ENCODE measurements at regions of chr10 and their contacts with region 1.

Region 1: DNA sequence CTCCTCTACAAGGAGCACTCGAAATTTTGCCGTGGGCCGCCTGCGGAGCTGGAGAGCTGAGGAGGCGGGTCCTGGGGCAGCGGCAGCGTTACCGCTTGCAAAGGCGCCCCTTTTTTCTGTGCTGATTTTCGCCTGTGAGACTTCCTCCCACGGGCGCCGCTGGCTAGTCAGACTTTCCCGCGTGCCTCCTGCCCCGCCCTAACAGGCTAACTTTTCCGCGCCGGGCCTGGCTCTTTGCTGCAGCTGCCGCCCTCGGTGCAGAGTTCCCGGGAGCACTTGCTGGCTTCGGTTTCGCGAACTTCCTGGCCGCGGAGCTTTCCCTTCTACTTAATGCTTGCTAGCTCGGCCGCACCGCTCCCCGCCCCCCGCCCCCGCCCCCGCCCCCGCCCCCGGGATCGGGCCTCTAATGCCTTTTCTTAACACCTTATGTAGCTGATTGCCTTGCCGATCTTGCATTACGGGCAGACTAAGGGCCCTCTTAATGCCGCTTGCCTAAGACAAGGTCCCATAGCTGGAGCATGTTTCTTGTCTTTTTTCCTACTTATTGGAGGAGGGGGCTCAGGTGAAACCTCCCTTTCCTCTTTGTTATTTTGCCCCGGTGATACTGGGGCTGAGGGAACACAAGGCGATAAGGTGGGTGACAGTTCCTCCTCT is 37.9 kb upstream of the RASGEF1A start:
- DNase-seq: peak in 7 of 9 donors; percentile 23 to 60 (median 32)
- ATAC-seq: peak; percentile 71
- H3K4me3 ChIP-seq: peak overlapping the region; percentile 30
- H3K4me3 Mint-ChIP-seq: peak overlapping the region; percentile 76 to 87 (median 82)
- H3K27ac ChIP-seq: no peak overlapping the region
- H3K27ac Mint-ChIP-seq: peak overlapping the region in 2 of 9 donors; percentile 76 to 80
- H3K4me1 ChIP-seq: peaks cover 21 to 23% of the 10 kb centered on the region in 2 donors
- H3K4me1 Mint-ChIP-seq: peaks cover 23 to 55% (median 47%) of the 10 kb centered on the region in 7 donors
- H3K27me3 ChIP-seq: no peaks in the 10 kb centered on the region
- H3K27me3 Mint-ChIP-seq: peaks cover 0 to 38% (median 6%) of the 10 kb centered on the region in 5 donors

Region 2: DNA sequence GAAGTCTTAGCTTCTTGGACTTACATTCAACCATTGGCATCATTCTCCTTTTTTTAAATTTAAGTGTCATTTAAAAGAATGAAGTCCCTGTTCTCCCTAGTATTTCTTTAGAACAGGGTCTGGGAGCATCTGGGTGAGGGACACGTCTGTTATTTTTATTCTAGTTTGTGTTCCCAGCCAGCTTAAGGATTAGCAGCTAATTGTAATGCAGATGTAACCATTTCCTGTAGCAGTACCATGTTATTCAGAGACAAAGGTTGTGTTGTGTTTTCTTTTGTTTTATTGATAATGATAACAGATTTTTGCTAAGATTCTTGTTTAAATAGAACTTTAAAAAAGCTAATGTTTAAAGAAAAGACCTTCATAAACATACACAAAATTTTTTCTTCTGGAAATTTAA is 487.9 kb before region 1 on chr10:
- CTCF ChIA-PET with region 1: no interaction called
- POLR2A ChIA-PET with region 1: no interaction called
- intact Hi-C with region 1: no loop called
- DNase-seq: no peak
- ATAC-seq: no peak
- H3K4me3 ChIP-seq: no peak overlapping the region
- H3K4me3 Mint-ChIP-seq: no peak overlapping the region
- H3K27ac ChIP-seq: no peak overlapping the region
- H3K27ac Mint-ChIP-seq: peak overlapping the region in 1 of 9 donors; percentile 69
- H3K4me1 ChIP-seq: no peaks in the 10 kb centered on the region
- H3K4me1 Mint-ChIP-seq: peaks cover 5 to 38% (median 20%) of the 10 kb centered on the region in 7 donors
- H3K27me3 ChIP-seq: no peaks in the 10 kb centered on the region
- H3K27me3 Mint-ChIP-seq: no peaks in the 10 kb centered on the region

Region 3: DNA sequence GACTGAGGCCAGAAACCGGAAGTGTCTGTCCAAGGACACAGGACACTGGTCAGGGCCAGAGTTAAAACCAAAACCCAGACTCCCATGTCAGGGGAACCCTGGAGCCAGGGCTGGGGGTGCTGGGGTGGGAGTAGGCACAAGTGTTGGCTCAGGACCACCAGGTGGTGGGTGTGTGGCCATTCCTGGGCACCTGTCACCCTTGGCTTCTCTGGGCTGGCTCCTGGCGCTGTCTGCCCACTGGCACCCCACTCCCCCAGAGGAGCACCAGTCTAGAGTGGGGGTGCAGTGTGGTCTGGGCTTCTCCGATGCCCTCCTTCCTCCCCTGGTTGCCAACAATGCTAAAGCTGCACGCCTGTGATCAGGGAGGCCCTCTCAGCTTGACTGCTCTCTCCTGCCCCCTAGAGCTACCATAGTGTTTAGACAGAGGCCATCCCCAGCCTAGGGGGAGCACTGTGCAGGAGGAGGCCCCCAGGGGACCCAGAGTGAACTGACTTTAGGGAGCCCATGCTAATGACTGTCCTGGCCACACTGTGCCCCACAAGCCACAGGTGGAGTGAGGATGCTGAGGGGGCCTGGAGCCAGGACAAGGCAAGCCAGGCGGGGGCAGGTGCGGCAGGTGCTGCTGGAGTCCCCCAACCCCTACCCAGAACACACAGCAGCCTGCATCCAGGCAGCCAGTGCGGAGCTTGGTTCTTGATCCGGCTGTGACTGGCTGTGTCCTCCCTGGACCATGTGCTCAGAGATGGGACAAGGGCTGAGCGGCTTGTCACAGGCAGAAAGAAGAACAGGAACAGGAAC is 49.0 kb before region 1 on chr10:
- CTCF ChIA-PET with region 1: no interaction called
- POLR2A ChIA-PET with region 1: no interaction called
- intact Hi-C with region 1: no loop called
- DNase-seq: peak in 1 of 9 donors; percentile 14
- ATAC-seq: peak; percentile 65
- H3K4me3 ChIP-seq: no peak overlapping the region
- H3K4me3 Mint-ChIP-seq: no peak overlapping the region
- H3K27ac ChIP-seq: no peak overlapping the region
- H3K27ac Mint-ChIP-seq: no peak overlapping the region
- H3K4me1 ChIP-seq: peaks cover 0 to 26% of the 10 kb centered on the region in 2 donors
- H3K4me1 Mint-ChIP-seq: peaks cover 5 to 20% (median 6%) of the 10 kb centered on the region in 7 donors
- H3K27me3 ChIP-seq: no peaks in the 10 kb centered on the region
- H3K27me3 Mint-ChIP-seq: peaks cover 0 to 4% (median 0%) of the 10 kb centered on the region in 5 donors

Region 4: DNA sequence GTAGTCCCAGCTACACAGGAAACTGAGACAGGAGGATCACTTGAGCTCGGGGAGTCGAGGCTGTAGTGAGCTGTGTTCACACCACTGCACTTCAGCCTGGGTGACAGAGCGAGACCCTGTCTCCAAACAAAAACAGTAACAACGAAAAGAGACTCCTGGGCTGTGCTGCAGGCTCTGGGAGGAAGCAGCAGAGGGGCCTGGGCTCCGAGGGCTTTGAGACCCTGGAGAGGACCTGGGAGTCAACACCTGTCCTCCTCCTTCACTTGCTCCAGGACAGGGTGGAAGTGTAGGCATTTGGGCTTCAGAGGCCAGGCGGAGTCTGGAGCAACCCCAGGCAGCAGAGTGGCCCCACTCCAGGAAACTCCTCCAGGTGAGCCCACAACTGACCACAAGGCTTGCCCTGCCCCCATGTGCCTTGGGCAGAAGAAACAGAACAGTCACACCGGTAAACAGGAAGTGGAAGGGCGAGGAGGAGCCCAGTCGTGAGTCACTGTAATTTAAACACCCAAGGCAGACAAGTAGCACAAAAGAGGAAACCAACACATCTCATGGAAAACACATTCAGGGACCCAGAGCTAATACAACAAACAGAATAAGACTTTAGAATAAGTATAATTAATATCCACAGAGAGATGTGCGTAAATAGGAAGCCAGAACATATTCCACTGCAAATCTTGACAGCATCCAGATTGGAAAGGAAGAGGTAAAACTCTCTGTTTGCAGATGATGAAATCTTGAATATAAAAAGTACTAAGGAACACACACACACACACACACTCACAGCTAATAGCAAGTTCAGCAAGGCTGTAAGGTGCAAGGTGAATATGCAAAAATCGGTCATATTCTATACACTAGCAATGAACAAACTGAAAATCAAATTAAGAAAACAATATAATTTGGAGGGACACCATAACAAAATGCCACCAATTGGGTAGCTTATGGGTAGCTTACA is 17.5 kb before region 1 on chr10:
- CTCF ChIA-PET with region 1: interaction called, 9 read pairs
- POLR2A ChIA-PET with region 1: interaction called, 11 read pairs
- intact Hi-C with region 1: loop called (anchors 2 kb)
- DNase-seq: peak in 3 of 9 donors; percentile 26 to 66 (median 37)
- ATAC-seq: peak; percentile 79
- H3K4me3 ChIP-seq: peak overlapping the region; percentile 21
- H3K4me3 Mint-ChIP-seq: peak overlapping the region; percentile 2 to 75 (median 64)
- H3K27ac ChIP-seq: no peak overlapping the region
- H3K27ac Mint-ChIP-seq: peak overlapping the region; percentile 62 to 94 (median 84)
- H3K4me1 ChIP-seq: peaks cover 16 to 25% of the 10 kb centered on the region in 2 donors
- H3K4me1 Mint-ChIP-seq: peaks cover 19 to 61% (median 26%) of the 10 kb centered on the region in 7 donors
- H3K27me3 ChIP-seq: no peaks in the 10 kb centered on the region
- H3K27me3 Mint-ChIP-seq: peaks cover 0 to 25% (median 4%) of the 10 kb centered on the region in 5 donors

Region 5: GRCh38 chr10:43292755-43293676 is 11.8 kb before region 1 on chr10:
- CTCF ChIA-PET with region 1: interaction called, 9 read pairs
- POLR2A ChIA-PET with region 1: interaction called, 11 read pairs
- intact Hi-C with region 1: loop called (anchors 1 to 2 kb)
- DNase-seq: peak in 6 of 9 donors; percentile 22 to 51 (median 44)
- ATAC-seq: peak; percentile 72
- H3K4me3 ChIP-seq: no peak overlapping the region
- H3K4me3 Mint-ChIP-seq: peak overlapping the region; percentile 13 to 75 (median 55)
- H3K27ac ChIP-seq: no peak overlapping the region
- H3K27ac Mint-ChIP-seq: peak overlapping the region in 6 of 9 donors; percentile 65 to 84 (median 78)
- H3K4me1 ChIP-seq: peaks cover 31 to 35% of the 10 kb centered on the region in 2 donors
- H3K4me1 Mint-ChIP-seq: peaks cover 16 to 83% (median 34%) of the 10 kb centered on the region in 7 donors
- H3K27me3 ChIP-seq: no peaks in the 10 kb centered on the region
- H3K27me3 Mint-ChIP-seq: peaks cover 0 to 15% (median 6%) of the 10 kb centered on the region in 5 donors

Region 6: GRCh38 chr10:43322769-43323168 is 18.0 kb after region 1 on chr10:
- CTCF ChIA-PET with region 1: no interaction called
- POLR2A ChIA-PET with region 1: no interaction called
- intact Hi-C with region 1: loop called in 1 of 2 experiments (anchors 2 kb)
- DNase-seq: peak; percentile 51 to 82 (median 63)
- ATAC-seq: peak; percentile 98
- H3K4me3 ChIP-seq: no peak overlapping the region
- H3K4me3 Mint-ChIP-seq: peak overlapping the region in 8 of 10 donors; percentile 23 to 64 (median 40)
- H3K27ac ChIP-seq: no peak overlapping the region
- H3K27ac Mint-ChIP-seq: peak overlapping the region in 3 of 9 donors; percentile 26 to 78 (median 76)
- H3K4me1 ChIP-seq: peaks cover 0 to 3% of the 10 kb centered on the region in 2 donors
- H3K4me1 Mint-ChIP-seq: peaks cover 0 to 38% (median 12%) of the 10 kb centered on the region in 7 donors
- H3K27me3 ChIP-seq: no peaks in the 10 kb centered on the region
- H3K27me3 Mint-ChIP-seq: peaks cover 8 to 27% (median 10%) of the 10 kb centered on the region in 5 donors

Region 7: DNA sequence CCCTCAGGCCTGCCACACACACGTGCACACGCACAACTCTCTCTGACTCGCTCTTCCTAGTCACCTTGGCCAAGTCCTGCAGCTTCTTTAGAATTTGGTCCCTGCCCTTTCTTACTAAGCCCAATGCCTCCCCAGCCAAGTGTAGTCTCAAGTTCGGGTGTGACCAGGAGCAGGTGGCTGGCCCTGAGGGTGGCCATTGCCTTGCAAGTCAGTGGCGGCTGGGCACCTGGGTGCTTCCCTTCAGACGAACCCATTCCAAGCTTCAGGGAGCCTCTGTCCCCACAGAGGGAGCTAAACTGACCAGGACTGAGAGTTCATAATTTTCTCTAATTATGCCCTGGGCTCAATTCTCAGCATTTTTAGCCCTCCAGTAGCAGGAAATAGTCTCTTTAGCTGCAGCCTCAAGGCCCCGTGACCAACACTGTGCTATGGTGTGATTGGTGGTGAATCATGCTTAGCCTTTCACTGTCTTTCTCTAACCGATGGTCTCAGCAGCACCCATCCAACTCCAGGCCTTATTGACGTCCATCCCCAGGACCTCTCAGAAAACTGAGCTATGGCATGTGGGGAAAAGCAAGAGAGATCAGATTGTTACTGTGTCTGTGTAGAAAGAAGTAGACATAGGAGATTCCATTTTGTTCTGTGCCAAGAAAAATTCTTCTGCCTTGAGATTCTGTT is 32.0 kb after region 1 on chr10:
- CTCF ChIA-PET with region 1: no interaction called
- POLR2A ChIA-PET with region 1: interaction called, 5 read pairs
- intact Hi-C with region 1: loop called in 1 of 2 experiments (anchors 1 kb)
- DNase-seq: no peak
- ATAC-seq: no peak
- H3K4me3 ChIP-seq: no peak overlapping the region
- H3K4me3 Mint-ChIP-seq: no peak overlapping the region
- H3K27ac ChIP-seq: no peak overlapping the region
- H3K27ac Mint-ChIP-seq: no peak overlapping the region
- H3K4me1 ChIP-seq: peaks cover 11 to 12% of the 10 kb centered on the region in 2 donors
- H3K4me1 Mint-ChIP-seq: peaks cover 14 to 51% (median 18%) of the 10 kb centered on the region in 7 donors
- H3K27me3 ChIP-seq: no peaks in the 10 kb centered on the region
- H3K27me3 Mint-ChIP-seq: peaks cover 5 to 29% (median 12%) of the 10 kb centered on the region in 5 donors